ENCODE measurements at regions of chr19 and their contacts with region 1.

Region 1: GRCh38 chr19:57682226-57682766 is 519 bp downstream of the ZNF551 start:
- DNase-seq: no peak
- ATAC-seq: no peak
- H3K4me3 ChIP-seq: peak overlapping the region; percentile 93
- H3K4me3 Mint-ChIP-seq: peak overlapping the region; percentile 89 to 99 (median 97)
- H3K27ac ChIP-seq: peak overlapping the region; percentile 80
- H3K27ac Mint-ChIP-seq: peak overlapping the region; percentile 90 to 98 (median 96)
- H3K4me1 ChIP-seq: peaks cover 9 to 13% of the 10 kb centered on the region in 2 donors
- H3K4me1 Mint-ChIP-seq: peaks cover 25 to 46% (median 39%) of the 10 kb centered on the region in 7 donors
- H3K27me3 ChIP-seq: no peaks in the 10 kb centered on the region
- H3K27me3 Mint-ChIP-seq: peaks cover 2 to 8% (median 7%) of the 10 kb centered on the region in 5 donors

Region 2: GRCh38 chr19:57249329-57249728 is 433.0 kb before region 1 on chr19:
- CTCF ChIA-PET with region 1: no interaction called
- POLR2A ChIA-PET with region 1: no interaction called
- intact Hi-C with region 1: no loop called
- DNase-seq: no peak
- ATAC-seq: no peak
- H3K4me3 ChIP-seq: no peak overlapping the region
- H3K4me3 Mint-ChIP-seq: no peak overlapping the region
- H3K27ac ChIP-seq: no peak overlapping the region
- H3K27ac Mint-ChIP-seq: no peak overlapping the region
- H3K4me1 ChIP-seq: no peaks in the 10 kb centered on the region
- H3K4me1 Mint-ChIP-seq: peaks cover 0 to 13% (median 4%) of the 10 kb centered on the region in 7 donors
- H3K27me3 ChIP-seq: no peaks in the 10 kb centered on the region
- H3K27me3 Mint-ChIP-seq: no peaks in the 10 kb centered on the region

Region 3: DNA sequence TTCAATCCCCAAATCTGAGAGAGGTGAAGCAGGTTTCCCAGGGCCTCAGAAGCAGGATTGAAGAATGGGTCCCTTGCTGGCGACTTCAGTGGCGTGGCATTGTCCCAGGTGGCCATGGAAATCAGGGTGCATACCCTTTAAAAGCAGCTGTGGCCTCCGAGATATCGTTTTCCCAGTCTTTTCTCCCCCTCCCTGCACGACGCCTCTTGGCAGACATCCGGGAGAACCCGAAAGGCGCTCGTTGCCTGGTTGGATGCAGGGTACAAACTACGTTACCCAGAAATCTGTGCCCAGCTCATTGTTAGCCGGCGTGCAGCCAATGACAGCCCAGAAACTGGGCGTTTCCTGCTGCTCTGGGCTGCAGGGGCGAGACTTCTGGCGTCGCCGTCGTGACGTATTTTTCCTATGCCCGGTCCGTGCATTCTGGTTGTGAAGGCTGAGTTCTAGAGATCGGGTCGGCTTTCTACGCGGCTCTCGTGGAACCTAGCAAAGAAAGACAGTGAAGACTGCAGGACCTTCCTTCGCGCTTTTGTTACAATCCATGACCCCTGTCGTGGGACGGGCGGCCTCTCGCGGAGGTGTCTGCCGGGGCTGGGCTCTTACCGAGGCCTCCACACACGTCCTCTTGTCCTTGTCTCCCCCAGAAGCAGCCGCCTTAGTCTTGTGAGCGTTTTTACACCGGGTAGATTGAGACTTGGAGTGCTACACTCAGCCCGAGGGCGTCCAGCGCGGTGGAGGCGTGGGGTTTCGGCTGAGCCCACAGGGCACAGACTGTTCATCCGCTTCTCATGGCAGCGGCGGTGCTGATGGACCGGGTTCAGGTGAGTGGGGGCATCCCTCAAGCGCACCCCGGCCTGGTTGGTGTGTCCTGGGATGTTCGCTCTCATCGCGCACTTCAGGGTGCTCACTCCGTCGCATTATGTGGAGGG is 331.2 kb before region 1 on chr19 and contains the start of gene ZNF304:
- CTCF ChIA-PET with region 1: no interaction called
- POLR2A ChIA-PET with region 1: no interaction called
- intact Hi-C with region 1: loop called in 1 of 2 experiments (anchors 2 kb)
- DNase-seq: peak; percentile 51 to 85 (median 76)
- ATAC-seq: peak; percentile 100
- H3K4me3 ChIP-seq: peak within 1 kb of the TSS; percentile 83
- H3K4me3 Mint-ChIP-seq: peak within 1 kb of the TSS; percentile 93 to 97 (median 96)
- H3K27ac ChIP-seq: peak within 1 kb of the TSS; percentile 77
- H3K27ac Mint-ChIP-seq: peak within 1 kb of the TSS; percentile 80 to 96 (median 92)
- H3K4me1 ChIP-seq: peaks cover 11% of the 10 kb centered on the region in 2 donors
- H3K4me1 Mint-ChIP-seq: peaks cover 28 to 43% (median 32%) of the 10 kb centered on the region in 7 donors
- H3K27me3 ChIP-seq: no peaks in the 10 kb centered on the region
- H3K27me3 Mint-ChIP-seq: peaks cover 0 to 11% (median 7%) of the 10 kb centered on the region in 5 donors
- total RNA-seq, gene ZNF304: 6.0 to 12.5 (median 9.0) TPM

Region 4: GRCh38 chr19:57559404-57560025 is 122.8 kb before region 1 on chr19 and contains the start of gene ZNF550:
- CTCF ChIA-PET with region 1: no interaction called
- POLR2A ChIA-PET with region 1: no interaction called
- intact Hi-C with region 1: loop called in 1 of 2 experiments (anchors 1 kb)
- DNase-seq: peak; percentile 71 to 85 (median 84)
- ATAC-seq: peak; percentile 99
- H3K4me3 ChIP-seq: peak within 1 kb of the TSS; percentile 89
- H3K4me3 Mint-ChIP-seq: peak within 1 kb of the TSS; percentile 87 to 99 (median 98)
- H3K27ac ChIP-seq: peak within 1 kb of the TSS; percentile 82
- H3K27ac Mint-ChIP-seq: peak within 1 kb of the TSS; percentile 81 to 96 (median 91)
- H3K4me1 ChIP-seq: peaks cover 16 to 19% of the 10 kb centered on the region in 2 donors
- H3K4me1 Mint-ChIP-seq: peaks cover 21 to 45% (median 33%) of the 10 kb centered on the region in 7 donors
- H3K27me3 ChIP-seq: no peaks in the 10 kb centered on the region
- H3K27me3 Mint-ChIP-seq: peaks cover 0 to 16% (median 4%) of the 10 kb centered on the region in 5 donors
- total RNA-seq, gene ZNF550: 12.9 to 56.2 (median 23.5) TPM

Region 5: GRCh38 chr19:57599761-57600383 is 82.4 kb before region 1 on chr19 and contains the start of gene ZNF530:
- CTCF ChIA-PET with region 1: no interaction called
- POLR2A ChIA-PET with region 1: no interaction called
- intact Hi-C with region 1: no loop called
- DNase-seq: peak; percentile 61 to 81 (median 73)
- ATAC-seq: peak; percentile 97
- H3K4me3 ChIP-seq: peak within 1 kb of the TSS; percentile 87
- H3K4me3 Mint-ChIP-seq: peak within 1 kb of the TSS; percentile 71 to 92 (median 89)
- H3K27ac ChIP-seq: peak within 1 kb of the TSS; percentile 69
- H3K27ac Mint-ChIP-seq: peak within 1 kb of the TSS in 8 of 9 donors; percentile 51 to 90 (median 81)
- H3K4me1 ChIP-seq: peaks cover 10% of the 10 kb centered on the region in 2 donors
- H3K4me1 Mint-ChIP-seq: peaks cover 14 to 28% (median 22%) of the 10 kb centered on the region in 7 donors
- H3K27me3 ChIP-seq: no peaks in the 10 kb centered on the region
- H3K27me3 Mint-ChIP-seq: no peaks in the 10 kb centered on the region
- total RNA-seq, gene ZNF530: 2.0 to 10.9 (median 6.2) TPM

Region 6: DNA sequence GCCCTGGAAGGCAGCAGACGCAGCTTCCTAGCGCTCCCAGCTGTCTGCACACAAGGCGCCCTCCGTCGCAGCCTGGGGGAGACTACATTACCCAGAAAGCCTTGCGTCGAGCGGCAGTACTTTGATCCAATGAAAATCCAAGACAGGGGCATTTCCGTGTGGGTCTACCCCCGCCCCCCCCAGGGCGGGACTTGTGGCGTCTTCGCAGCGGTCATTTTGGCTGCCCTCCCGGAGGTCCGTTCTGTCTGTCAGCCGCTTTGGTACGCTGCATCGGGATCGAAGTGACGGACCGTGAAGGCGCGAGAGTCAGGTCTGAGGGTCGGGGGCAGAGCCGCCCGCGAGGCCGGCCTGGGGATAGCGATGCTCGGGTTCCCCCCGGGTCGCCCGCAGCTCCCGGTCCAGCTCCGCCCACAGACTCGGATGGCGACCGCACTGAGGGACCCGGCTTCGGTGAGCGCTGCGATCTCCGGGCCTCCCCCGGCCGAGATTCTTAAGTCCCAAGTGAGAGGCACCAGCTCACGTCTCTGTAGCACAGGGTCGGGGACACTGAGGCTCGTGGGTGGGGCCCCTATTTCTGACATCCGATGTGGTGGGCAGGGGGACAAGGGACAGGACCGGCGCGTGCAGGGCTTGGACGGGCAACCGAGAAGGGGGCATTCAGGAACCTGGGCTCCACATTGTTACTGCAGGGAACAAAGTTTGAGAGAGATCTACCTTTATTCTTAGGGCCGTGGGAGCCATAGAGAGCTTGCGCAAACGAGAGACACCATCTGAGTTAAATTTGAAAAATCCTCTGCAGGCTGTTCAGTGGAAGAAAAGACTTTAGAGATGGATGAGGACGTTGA is 49.1 kb before region 1 on chr19 and contains the start of gene ZNF211:
- CTCF ChIA-PET with region 1: no interaction called
- POLR2A ChIA-PET with region 1: interaction called, 3 read pairs
- intact Hi-C with region 1: loop called (anchors 1 kb)
- DNase-seq: peak; percentile 74 to 89 (median 86)
- ATAC-seq: peak; percentile 100
- H3K4me3 ChIP-seq: peak within 1 kb of the TSS; percentile 87
- H3K4me3 Mint-ChIP-seq: peak within 1 kb of the TSS; percentile 87 to 97 (median 94)
- H3K27ac ChIP-seq: peak within 1 kb of the TSS; percentile 90
- H3K27ac Mint-ChIP-seq: peak within 1 kb of the TSS; percentile 81 to 97 (median 89)
- H3K4me1 ChIP-seq: peaks cover 3 to 13% of the 10 kb centered on the region in 2 donors
- H3K4me1 Mint-ChIP-seq: peaks cover 21 to 36% (median 28%) of the 10 kb centered on the region in 7 donors
- H3K27me3 ChIP-seq: no peaks in the 10 kb centered on the region
- H3K27me3 Mint-ChIP-seq: no peaks in the 10 kb centered on the region
- total RNA-seq, gene ZNF211: 18.0 to 56.7 (median 33.7) TPM

Region 7: DNA sequence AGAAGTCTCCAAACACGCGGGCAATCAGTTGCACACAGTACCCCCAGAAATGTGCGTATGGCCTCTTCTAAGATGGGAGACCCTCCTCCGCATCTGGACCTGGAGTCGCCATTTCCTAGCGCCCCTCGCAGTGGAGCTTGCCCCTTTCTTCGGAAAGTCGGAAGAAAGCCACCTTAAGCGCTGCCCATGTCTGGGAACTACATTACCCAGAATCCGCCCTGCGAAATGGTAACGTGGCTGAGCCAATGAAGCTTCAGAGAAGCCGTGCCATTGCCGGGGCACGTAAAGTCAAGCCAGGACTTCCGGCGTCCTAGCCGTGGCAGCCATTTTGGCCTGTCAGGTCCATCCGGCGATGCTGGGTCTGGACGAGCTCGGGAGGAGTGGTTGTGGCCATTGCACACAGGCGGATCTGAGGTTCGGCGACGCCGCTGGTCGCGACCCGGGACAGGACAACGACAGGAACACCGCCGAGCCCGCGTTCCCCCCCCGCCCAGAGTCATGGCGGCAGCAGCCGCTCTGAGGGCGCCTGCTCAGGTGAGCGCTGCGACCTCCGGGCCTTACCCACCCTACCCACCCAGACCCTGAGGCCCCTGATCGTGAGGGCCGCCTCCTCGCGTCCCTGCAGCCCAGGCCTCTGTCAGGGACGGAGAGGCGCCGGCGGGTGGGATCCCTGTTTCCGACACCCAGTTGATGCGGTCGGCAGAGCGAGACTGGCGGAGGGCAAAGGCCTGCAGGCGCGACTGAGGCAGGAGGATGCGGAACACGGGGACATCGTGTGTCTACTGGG is 87.2 kb after region 1 on chr19 and contains the start of gene ZNF586:
- CTCF ChIA-PET with region 1: no interaction called
- POLR2A ChIA-PET with region 1: no interaction called
- intact Hi-C with region 1: loop called (anchors 1 to 5 kb)
- DNase-seq: peak; percentile 64 to 89 (median 82)
- ATAC-seq: peak; percentile 99
- H3K4me3 ChIP-seq: peak within 1 kb of the TSS; percentile 91
- H3K4me3 Mint-ChIP-seq: peak within 1 kb of the TSS; percentile 90 to 98 (median 96)
- H3K27ac ChIP-seq: peak within 1 kb of the TSS; percentile 86
- H3K27ac Mint-ChIP-seq: peak within 1 kb of the TSS; percentile 79 to 97 (median 94)
- H3K4me1 ChIP-seq: peaks cover 6 to 12% of the 10 kb centered on the region in 2 donors
- H3K4me1 Mint-ChIP-seq: peaks cover 8 to 47% (median 38%) of the 10 kb centered on the region in 7 donors
- H3K27me3 ChIP-seq: no peaks in the 10 kb centered on the region
- H3K27me3 Mint-ChIP-seq: no peaks in the 10 kb centered on the region
- total RNA-seq, gene ZNF586: 16.4 to 47.5 (median 42.6) TPM

Measured in naive thymus-derived CD4-positive, alpha-beta T cell (primary cell).